ENCODE measurements at regions of chr7 and their contacts with region 1.

Region 1: GRCh38 chr7:158782761-158783401 is 46.4 kb downstream of the ESYT2 start:
- DNase-seq: peak; percentile 78 to 83
- ATAC-seq: peak; percentile 93 to 94
- H3K4me3 ChIP-seq: peak overlapping the region; percentile 3 to 26 (median 12)
- H3K27ac ChIP-seq: peak overlapping the region; percentile 79 to 85 (median 80)
- H3K4me1 ChIP-seq: peaks cover 27 to 29% of the 10 kb centered on the region in 2 donors
- H3K27me3 ChIP-seq: no peaks in the 10 kb centered on the region
- CTCF ChIP-seq: peak; percentile 53 to 71 (median 62)
- POLR2A ChIP-seq: peak in 1 of 2 donors; percentile 40

Region 2: DNA sequence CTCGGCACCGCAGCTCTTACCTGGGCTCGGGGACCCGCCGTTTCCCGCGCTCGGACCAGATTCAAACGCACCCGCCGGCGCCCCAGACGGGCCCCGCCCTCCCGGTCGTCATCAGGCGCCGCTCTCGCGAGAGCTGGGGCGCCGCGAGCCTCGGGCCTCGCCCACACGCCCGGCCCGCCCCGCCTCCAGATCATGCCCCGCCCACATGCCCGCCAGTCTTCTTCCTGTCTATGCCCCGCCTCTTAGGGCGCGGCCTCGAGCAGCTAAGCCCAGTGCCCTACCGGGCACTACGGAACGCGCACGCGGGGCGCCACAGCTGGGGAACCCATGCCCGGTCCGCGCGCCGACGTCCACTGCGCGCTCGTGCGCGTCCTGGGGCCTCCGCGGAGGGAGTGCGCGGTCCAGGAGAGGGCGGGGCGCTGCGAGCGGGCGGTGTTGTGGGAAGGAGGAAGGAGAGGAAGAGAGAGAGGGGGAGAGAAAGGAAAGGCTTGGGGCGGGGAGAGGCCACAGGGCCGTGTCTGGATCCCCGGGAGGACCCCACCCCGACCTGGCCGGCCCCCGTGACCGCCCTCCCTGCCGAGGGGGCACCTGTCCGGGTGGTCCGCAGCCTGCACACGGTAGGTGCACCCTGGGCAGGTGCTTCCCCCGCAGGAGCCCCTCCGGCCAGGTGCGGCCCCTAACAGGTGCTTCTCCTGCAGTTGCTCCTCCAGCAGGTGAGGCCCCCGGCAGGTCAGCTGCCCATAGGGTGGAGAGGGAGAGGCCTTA is 78.0 kb before region 1 on chr7 and contains the start of gene NCAPG2:
- in situ Hi-C with region 1: no loop called
- intact Hi-C with region 1: loop called (anchors 5 kb)
- DNase-seq: peak; percentile 94 to 96
- ATAC-seq: peak; percentile 98 to 99
- H3K4me3 ChIP-seq: peak within 1 kb of the TSS; percentile 71 to 97 (median 82)
- H3K27ac ChIP-seq: peak within 1 kb of the TSS; percentile 87 to 90 (median 88)
- H3K4me1 ChIP-seq: peaks cover 0 to 17% of the 10 kb centered on the region in 2 donors
- H3K27me3 ChIP-seq: no peaks in the 10 kb centered on the region
- CTCF ChIP-seq: peak; percentile 37 to 58 (median 40)
- POLR2A ChIP-seq: peak; percentile 94 to 96
- total RNA-seq, gene NCAPG2: 3.0 to 4.5 (median 3.9) TPM

Region 3: GRCh38 chr7:158740013-158740656 is 42.7 kb before region 1 on chr7:
- in situ Hi-C with region 1: no loop called
- intact Hi-C with region 1: no loop called
- DNase-seq: no peak
- ATAC-seq: no peak
- H3K4me3 ChIP-seq: no peak overlapping the region
- H3K27ac ChIP-seq: no peak overlapping the region
- H3K4me1 ChIP-seq: no peaks in the 10 kb centered on the region
- H3K27me3 ChIP-seq: no peaks in the 10 kb centered on the region
- CTCF ChIP-seq: no peak
- POLR2A ChIP-seq: no peak

Region 4: GRCh38 chr7:158818325-158819213 is 35.7 kb after region 1 on chr7:
- in situ Hi-C with region 1: no loop called
- intact Hi-C with region 1: loop called (anchors 1 kb)
- DNase-seq: peak; percentile 92 to 96
- ATAC-seq: peak; percentile 85
- H3K4me3 ChIP-seq: peak overlapping the region; percentile 8 to 40 (median 34)
- H3K27ac ChIP-seq: peak overlapping the region; percentile 88 to 95 (median 93)
- H3K4me1 ChIP-seq: peaks cover 77 to 82% of the 10 kb centered on the region in 2 donors
- H3K27me3 ChIP-seq: no peaks in the 10 kb centered on the region
- CTCF ChIP-seq: peak in 1 of 5 experiments; percentile 21
- POLR2A ChIP-seq: peak; percentile 46 to 60

Region 5: DNA sequence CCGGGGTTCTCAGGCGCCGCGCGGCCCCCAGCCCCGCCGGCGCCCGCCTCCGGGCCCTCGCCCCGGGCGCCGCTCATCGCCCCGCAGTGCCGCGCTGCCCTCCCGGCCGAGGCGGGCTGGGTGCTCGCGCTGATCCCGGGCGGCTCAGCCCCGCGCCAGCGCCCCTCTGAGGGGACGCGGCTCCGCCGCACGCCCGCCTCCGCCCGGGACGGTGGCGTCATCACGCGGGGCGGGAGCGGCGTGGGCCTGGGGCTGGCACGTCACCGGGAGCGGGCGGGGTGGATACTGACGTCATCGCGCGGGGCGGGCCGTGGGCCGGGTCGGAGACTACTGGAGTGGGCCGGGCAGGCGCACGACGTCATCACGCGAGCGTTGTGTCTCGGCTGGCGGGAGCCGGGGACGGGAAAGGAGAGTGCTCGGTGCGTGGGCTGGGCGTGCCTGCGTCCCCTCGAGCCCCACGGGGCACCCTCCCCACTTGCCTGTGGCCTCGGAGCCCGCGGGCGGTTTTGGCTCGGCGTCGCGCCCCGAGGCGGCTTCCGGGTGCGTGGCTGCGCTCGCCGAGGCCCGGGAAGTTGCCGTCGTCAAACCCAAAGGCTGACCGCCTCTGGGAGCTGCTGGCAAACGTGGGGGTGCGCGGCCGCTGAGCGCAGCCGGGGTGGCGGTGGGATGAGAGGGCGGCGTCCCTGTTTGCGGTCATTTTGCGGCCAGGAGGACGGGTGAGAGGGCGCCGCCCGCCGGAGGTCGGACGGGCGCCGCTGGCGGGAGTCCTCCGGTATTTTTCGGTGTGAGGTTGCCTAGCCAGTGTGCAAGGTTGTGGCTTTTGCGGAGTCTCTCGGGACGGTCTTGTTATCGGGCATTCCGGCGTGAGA is 46.7 kb after region 1 on chr7 and contains the start of gene ESYT2:
- in situ Hi-C with region 1: no loop called
- intact Hi-C with region 1: loop called (anchors 1 kb)
- DNase-seq: peak; percentile 97
- ATAC-seq: peak; percentile 83 to 89
- H3K4me3 ChIP-seq: peak within 1 kb of the TSS; percentile 79 to 99 (median 92)
- H3K27ac ChIP-seq: peak within 1 kb of the TSS; percentile 96 to 100 (median 100)
- H3K4me1 ChIP-seq: peaks cover 13 to 15% of the 10 kb centered on the region in 2 donors
- H3K27me3 ChIP-seq: no peaks in the 10 kb centered on the region
- CTCF ChIP-seq: peak in 2 of 5 experiments; percentile 28 to 40
- POLR2A ChIP-seq: peak; percentile 99
- total RNA-seq, gene ESYT2: 67.5 to 106 (median 74.7) TPM

Region 6: DNA sequence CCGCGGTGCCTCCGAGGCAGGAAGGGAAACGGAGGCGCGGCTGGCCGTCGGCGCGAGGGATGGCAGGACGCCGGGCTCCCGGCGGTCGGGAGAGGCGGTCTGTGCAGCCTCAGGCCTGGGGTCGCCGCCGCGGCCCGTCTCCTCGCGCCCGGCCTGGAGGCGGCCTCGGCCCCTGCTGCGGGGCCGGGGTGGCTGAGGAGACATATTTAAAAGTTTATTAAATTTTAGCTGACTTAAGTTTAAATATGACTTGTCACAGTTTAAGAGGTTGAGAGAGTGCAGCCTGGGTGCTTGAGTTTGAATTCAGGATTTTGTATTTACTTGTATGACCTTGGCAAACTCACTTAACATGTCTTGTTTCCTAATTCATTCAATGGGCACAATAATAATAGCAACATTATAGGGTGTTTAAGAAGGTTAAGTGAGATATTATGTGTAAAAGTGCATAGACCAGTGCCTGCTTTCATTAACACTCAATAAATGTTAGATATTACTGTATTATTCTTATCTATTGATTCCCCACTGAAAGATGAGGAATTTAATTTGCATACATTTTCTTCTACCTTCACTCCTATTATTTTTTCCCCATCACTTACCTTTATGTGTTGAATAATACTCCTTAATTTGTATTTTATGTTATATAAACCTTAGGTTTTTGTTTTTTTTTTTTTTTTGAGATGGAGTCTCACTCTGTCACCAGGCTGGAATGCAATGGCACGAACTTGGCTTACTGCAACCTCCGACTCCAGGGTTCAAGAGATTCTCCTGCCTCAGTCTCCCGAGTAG is 74.2 kb after region 1 on chr7:
- in situ Hi-C with region 1: loop called in 1 of 4 experiments (anchors 5 kb)
- intact Hi-C with region 1: loop called (anchors 10 kb)
- DNase-seq: no peak
- ATAC-seq: peak in 1 of 2 donors; percentile 17
- H3K4me3 ChIP-seq: peak overlapping the region; percentile 70 to 98 (median 88)
- H3K27ac ChIP-seq: peak overlapping the region; percentile 87 to 94 (median 92)
- H3K4me1 ChIP-seq: peaks cover 14 to 42% of the 10 kb centered on the region in 2 donors
- H3K27me3 ChIP-seq: no peaks in the 10 kb centered on the region
- CTCF ChIP-seq: no peak
- POLR2A ChIP-seq: no peak

Region 7: GRCh38 chr7:158863611-158864506 is 81.0 kb after region 1 on chr7:
- in situ Hi-C with region 1: loop called in 1 of 4 experiments (anchors 5 kb)
- intact Hi-C with region 1: loop called (anchors 10 kb)
- DNase-seq: peak; percentile 86 to 90
- ATAC-seq: peak; percentile 80 to 85
- H3K4me3 ChIP-seq: peak overlapping the region; percentile 55 to 69 (median 62)
- H3K27ac ChIP-seq: peak overlapping the region; percentile 90 to 94 (median 92)
- H3K4me1 ChIP-seq: peaks cover 13 to 36% of the 10 kb centered on the region in 2 donors
- H3K27me3 ChIP-seq: no peaks in the 10 kb centered on the region
- CTCF ChIP-seq: no peak
- POLR2A ChIP-seq: peak; percentile 66 to 78

Region 8: DNA sequence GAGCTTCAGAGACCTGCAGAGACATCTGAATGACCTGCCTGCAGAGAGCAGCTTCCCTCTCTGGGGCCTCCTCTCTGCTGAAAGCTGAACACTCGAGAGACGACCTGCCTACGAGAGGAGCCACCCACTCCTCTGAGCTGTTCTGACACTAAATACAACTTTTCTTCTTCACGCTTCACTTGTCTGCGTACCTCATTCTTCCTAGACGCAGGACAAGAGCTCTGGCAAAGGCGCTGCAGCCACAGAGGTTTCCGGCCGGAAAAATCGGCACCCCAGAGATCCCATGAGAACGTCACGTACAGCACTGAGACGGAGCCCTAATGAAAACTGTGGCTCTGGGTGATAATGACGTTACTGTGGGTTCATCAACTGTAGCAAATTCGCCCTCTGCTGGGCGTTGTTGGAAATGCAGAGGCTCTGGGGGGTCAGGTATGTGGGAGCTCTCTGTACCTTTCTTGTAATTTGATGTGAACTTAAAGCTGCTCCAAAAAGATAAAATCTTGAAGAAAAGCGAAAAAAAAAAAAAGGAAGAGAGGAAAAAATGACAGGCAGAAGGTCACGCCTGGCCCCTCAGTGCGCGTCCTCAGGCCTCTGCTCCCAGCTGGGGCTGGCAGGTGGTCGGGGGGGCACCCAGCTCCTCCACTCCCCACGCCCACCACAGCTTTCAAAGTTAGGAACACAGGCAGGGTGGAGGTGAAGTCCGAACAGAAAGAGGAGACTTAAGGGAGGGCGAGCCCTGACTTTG is 194.1 kb after region 1 on chr7:
- in situ Hi-C with region 1: no loop called
- intact Hi-C with region 1: loop called (anchors 2 kb)
- DNase-seq: peak; percentile 34 to 58
- ATAC-seq: peak; percentile 64 to 81
- H3K4me3 ChIP-seq: peak overlapping the region; percentile 27 to 49 (median 36)
- H3K27ac ChIP-seq: peak overlapping the region in 1 of 4 donors; percentile 43
- H3K4me1 ChIP-seq: peaks cover 0 to 4% of the 10 kb centered on the region in 2 donors
- H3K27me3 ChIP-seq: no peaks in the 10 kb centered on the region
- CTCF ChIP-seq: peak; percentile 71 to 80 (median 73)
- POLR2A ChIP-seq: no peak